ENCODE measurements at regions of chr2 and their contacts with region 1.

Region 1: DNA sequence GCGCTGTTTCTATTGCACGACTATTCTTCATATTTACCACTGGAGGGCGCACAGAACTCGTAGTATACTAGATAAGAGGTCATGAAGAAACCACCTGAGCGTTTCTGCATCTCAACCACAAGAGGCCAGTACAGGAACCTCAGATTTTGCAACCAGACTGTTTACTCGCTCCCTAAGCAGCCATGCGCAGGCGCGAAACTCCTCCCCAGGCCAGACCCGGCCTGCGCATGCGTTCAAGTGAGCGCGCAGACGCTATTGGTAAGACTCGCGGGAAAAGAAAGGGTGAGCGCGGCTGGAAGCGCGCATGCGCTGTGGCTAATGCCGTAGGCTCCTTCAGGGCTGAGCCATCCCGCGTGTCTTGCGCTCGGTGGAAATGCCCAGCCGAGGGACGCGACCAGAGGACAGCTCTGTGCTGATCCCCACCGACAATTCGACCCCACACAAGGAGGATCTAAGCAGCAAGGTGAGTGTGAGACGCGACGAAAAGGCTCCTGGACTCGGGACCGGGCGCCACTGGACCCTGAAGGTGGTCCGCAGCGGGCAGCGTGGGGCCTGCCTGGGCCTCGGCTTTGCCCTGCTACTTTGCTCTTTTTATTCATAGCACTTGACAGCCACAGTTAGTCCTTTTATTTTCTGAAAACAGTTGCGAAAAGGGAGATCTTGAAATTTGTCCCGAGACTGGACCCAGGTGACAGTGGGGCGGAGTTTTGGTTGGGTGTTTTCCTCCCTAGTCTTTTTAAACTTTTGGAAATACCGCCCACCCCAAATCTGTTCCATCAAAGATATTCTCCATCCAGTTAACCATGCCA is at the start of gene ASNSD1:
- DNase-seq: peak; percentile 97 to 100 (median 99)
- ATAC-seq: peak; percentile 89
- H3K4me3 ChIP-seq: peak within 1 kb of the TSS; percentile 79 to 88
- H3K4me3 Mint-ChIP-seq: no peak within 1 kb of the TSS
- H3K27ac ChIP-seq: peak within 1 kb of the TSS; percentile 87 to 91
- H3K27ac Mint-ChIP-seq: no peak within 1 kb of the TSS
- H3K4me1 ChIP-seq: peaks cover 47% of the 10 kb centered on the region
- H3K4me1 Mint-ChIP-seq: peaks cover 61% of the 10 kb centered on the region
- H3K27me3 ChIP-seq: no peaks in the 10 kb centered on the region
- H3K27me3 Mint-ChIP-seq: no peaks in the 10 kb centered on the region
- CTCF ChIP-seq: peak; percentile 92
- total RNA-seq, gene ASNSD1: 62.7 to 69.4 TPM

Region 2: DNA sequence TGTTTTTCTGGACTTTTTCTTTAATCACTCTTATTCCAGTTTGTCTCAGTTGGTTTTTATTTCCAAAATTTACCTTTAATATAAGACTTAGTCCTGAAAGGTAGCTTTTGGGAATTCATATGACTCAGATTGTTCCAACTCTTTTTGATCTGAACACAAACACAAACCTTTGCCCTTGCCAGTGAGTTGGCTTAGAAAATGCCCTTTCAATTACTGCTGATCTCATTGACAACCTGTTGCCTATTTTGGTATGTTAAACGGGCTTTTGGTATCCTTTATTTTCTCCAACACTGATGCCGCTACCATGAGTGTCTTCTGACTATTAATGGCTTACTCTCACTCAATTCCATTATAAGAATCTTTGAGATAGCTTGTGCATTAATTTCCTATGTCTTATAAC is 1226.2 kb before region 1 on chr2:
- CTCF ChIA-PET with region 1: no interaction called
- POLR2A ChIA-PET with region 1: no interaction called
- intact Hi-C with region 1: no loop called
- DNase-seq: no peak
- ATAC-seq: no peak
- H3K4me3 ChIP-seq: no peak overlapping the region
- H3K4me3 Mint-ChIP-seq: no peak overlapping the region
- H3K27ac ChIP-seq: no peak overlapping the region
- H3K27ac Mint-ChIP-seq: no peak overlapping the region
- H3K4me1 ChIP-seq: no peaks in the 10 kb centered on the region
- H3K4me1 Mint-ChIP-seq: no peaks in the 10 kb centered on the region
- H3K27me3 ChIP-seq: no peaks in the 10 kb centered on the region
- H3K27me3 Mint-ChIP-seq: no peaks in the 10 kb centered on the region
- CTCF ChIP-seq: no peak

Region 3: DNA sequence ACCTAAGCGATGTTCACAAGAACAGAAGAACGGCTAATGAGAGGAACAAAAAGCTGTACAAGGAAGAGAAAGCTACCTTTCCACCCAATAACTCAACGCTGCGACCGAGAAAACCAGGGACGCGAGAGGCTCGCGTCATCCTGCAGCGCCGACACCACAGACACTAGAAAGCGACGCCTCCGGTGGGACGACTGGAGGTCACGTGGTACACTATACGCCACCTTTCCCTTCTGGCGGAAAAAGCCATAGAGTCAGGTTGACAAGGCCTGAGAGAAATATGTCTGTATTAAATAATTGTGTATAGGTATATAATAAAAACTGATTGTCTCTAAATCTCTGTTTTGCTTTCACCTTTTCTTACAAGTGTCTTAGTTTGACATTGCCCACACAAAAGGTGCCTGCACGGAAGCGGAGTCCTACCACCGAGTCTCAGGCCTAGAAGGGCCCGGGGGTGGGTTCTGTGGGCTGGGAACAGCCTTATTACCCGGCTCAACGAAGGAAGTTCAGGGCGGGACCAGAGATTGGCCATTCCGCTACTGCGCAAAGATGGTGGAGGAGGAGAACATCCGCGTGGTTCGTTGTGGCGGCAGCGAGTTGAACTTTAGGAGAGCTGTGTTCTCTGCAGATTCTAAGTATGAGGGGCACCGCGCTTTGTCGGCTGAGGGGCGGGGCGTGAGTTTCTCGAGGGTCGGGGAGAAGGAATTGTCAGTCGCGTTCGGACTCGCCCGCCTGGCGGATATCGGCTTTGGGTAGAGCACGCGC is 220.2 kb before region 1 on chr2 and contains the start of gene WDR75:
- CTCF ChIA-PET with region 1: interaction called, 3 read pairs
- POLR2A ChIA-PET with region 1: interaction called, 8 read pairs
- intact Hi-C with region 1: loop called (anchors 2 to 5 kb)
- DNase-seq: peak; percentile 85 to 97 (median 92)
- ATAC-seq: peak; percentile 94
- H3K4me3 ChIP-seq: peak within 1 kb of the TSS; percentile 71 to 92
- H3K4me3 Mint-ChIP-seq: peak within 1 kb of the TSS; percentile 100
- H3K27ac ChIP-seq: peak within 1 kb of the TSS; percentile 96 to 98
- H3K27ac Mint-ChIP-seq: peak within 1 kb of the TSS; percentile 100
- H3K4me1 ChIP-seq: peaks cover 33% of the 10 kb centered on the region
- H3K4me1 Mint-ChIP-seq: peaks cover 12% of the 10 kb centered on the region
- H3K27me3 ChIP-seq: no peaks in the 10 kb centered on the region
- H3K27me3 Mint-ChIP-seq: no peaks in the 10 kb centered on the region
- CTCF ChIP-seq: no peak
- total RNA-seq, gene WDR75: 45.0 to 52.6 TPM

Region 4: DNA sequence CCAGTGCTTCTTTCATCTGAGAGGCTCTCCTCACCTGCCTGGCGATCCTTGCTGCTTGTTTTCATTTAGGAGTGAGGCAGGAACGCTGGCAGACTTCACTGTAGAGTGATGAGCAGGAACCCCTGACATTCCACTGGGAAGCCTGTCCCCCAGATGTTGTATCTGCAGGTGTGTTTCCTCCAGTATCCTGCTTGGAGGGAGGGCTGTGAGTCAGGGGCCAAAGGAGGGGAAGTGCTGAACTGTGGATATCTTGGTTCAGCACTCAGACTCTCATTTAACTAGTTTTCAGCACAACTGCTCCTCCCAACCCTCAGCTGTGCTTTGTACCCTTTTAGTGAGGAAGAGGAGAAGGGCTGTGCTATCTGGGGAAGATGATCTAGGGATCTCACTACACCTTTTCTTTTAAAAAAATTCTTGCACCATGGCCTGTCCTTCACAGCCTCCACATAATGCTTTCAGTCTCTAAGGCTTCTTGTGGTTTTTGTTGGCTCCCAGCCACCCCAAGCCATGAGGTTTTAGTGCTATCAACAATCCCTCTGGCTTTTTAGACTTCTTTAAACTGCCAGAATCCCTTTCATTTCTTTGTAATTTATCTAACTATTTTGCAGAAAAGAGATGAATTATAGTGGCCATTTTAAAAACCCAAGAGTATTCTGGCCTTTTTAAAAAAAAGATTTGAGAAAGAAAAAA is 24.3 kb after region 1 on chr2:
- CTCF ChIA-PET with region 1: interaction called, 10 read pairs
- POLR2A ChIA-PET with region 1: no interaction called
- intact Hi-C with region 1: no loop called
- DNase-seq: peak in 3 of 9 experiments; percentile 21 to 36 (median 21)
- ATAC-seq: no peak
- H3K4me3 ChIP-seq: no peak overlapping the region
- H3K4me3 Mint-ChIP-seq: no peak overlapping the region
- H3K27ac ChIP-seq: no peak overlapping the region
- H3K27ac Mint-ChIP-seq: no peak overlapping the region
- H3K4me1 ChIP-seq: peaks cover 6% of the 10 kb centered on the region
- H3K4me1 Mint-ChIP-seq: peaks cover 26% of the 10 kb centered on the region
- H3K27me3 ChIP-seq: no peaks in the 10 kb centered on the region
- H3K27me3 Mint-ChIP-seq: no peaks in the 10 kb centered on the region
- CTCF ChIP-seq: no peak

Region 5: GRCh38 chr2:189762551-189763298 is 101.4 kb after region 1 on chr2 and contains the start of gene OSGEPL1:
- CTCF ChIA-PET with region 1: interaction called, 9 read pairs
- POLR2A ChIA-PET with region 1: interaction called, 14 read pairs
- intact Hi-C with region 1: loop called (anchors 1 to 5 kb)
- DNase-seq: peak; percentile 84 to 97 (median 94)
- ATAC-seq: peak; percentile 92
- H3K4me3 ChIP-seq: peak within 1 kb of the TSS; percentile 69 to 83
- H3K4me3 Mint-ChIP-seq: peak within 1 kb of the TSS; percentile 97
- H3K27ac ChIP-seq: peak within 1 kb of the TSS; percentile 85 to 88
- H3K27ac Mint-ChIP-seq: peak within 1 kb of the TSS; percentile 98
- H3K4me1 ChIP-seq: peaks cover 8% of the 10 kb centered on the region
- H3K4me1 Mint-ChIP-seq: peaks cover 15% of the 10 kb centered on the region
- H3K27me3 ChIP-seq: no peaks in the 10 kb centered on the region
- H3K27me3 Mint-ChIP-seq: no peaks in the 10 kb centered on the region
- CTCF ChIP-seq: peak; percentile 52
- total RNA-seq, gene OSGEPL1: 3.6 to 3.9 TPM

Region 6: GRCh38 chr2:190277234-190278112 is 616.1 kb after region 1 on chr2:
- CTCF ChIA-PET with region 1: no interaction called
- POLR2A ChIA-PET with region 1: no interaction called
- intact Hi-C with region 1: loop called in 1 of 2 experiments (anchors 1 kb)
- DNase-seq: peak in 3 of 9 experiments; percentile 5 to 37 (median 22)
- ATAC-seq: peak; percentile 54
- H3K4me3 ChIP-seq: no peak overlapping the region
- H3K4me3 Mint-ChIP-seq: no peak overlapping the region
- H3K27ac ChIP-seq: no peak overlapping the region
- H3K27ac Mint-ChIP-seq: no peak overlapping the region
- H3K4me1 ChIP-seq: no peaks in the 10 kb centered on the region
- H3K4me1 Mint-ChIP-seq: no peaks in the 10 kb centered on the region
- H3K27me3 ChIP-seq: no peaks in the 10 kb centered on the region
- H3K27me3 Mint-ChIP-seq: no peaks in the 10 kb centered on the region
- CTCF ChIP-seq: peak; percentile 50

Region 7: GRCh38 chr2:190648289-190649034 is 987.1 kb after region 1 on chr2:
- CTCF ChIA-PET with region 1: no interaction called
- POLR2A ChIA-PET with region 1: no interaction called
- intact Hi-C with region 1: loop called in 1 of 2 experiments (anchors 5 kb)
- DNase-seq: peak; percentile 80 to 97 (median 88)
- ATAC-seq: peak; percentile 81
- H3K4me3 ChIP-seq: peak overlapping the region; percentile 58 to 63
- H3K4me3 Mint-ChIP-seq: peak overlapping the region; percentile 84
- H3K27ac ChIP-seq: peak overlapping the region; percentile 63 to 84
- H3K27ac Mint-ChIP-seq: peak overlapping the region; percentile 88
- H3K4me1 ChIP-seq: peaks cover 26% of the 10 kb centered on the region
- H3K4me1 Mint-ChIP-seq: peaks cover 44% of the 10 kb centered on the region
- H3K27me3 ChIP-seq: no peaks in the 10 kb centered on the region
- H3K27me3 Mint-ChIP-seq: no peaks in the 10 kb centered on the region
- CTCF ChIP-seq: no peak

Region 8: DNA sequence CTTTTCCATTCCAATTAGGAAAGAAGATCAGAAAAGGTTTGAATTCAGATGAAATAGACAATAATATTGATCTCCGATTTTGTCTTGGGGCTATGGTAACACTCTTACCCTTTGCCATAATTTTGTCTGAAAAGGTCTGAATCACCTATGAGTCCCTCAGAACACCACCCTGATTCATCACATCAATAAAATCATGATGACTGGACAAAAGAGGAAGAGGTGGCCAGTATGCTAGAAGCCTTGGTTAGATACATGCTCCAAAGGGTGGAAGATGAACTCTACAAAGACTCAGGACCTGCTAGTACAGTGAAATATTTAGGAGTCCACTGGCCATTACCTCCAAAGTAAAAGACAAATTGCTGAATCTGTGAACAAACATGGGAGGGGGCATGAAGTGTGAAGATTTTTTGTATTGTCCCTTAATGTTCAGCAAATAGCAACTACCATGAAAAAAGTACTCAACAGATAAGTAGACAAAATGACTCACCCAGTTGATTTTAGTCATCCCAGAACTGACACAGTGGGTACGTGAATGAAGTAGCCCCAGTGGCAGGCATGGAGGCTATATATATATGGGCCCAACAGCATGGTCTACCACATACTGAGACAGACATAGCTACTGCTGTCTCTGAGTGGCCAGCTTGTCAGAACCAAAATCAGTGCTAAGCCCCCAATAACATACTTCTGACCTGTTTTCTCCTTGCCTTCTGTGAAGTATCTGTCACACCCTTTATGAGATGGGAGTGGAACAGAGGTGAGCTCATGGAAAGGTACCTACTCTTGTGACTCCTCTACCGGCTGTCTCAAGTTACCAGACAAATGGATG is 1182.7 kb after region 1 on chr2:
- CTCF ChIA-PET with region 1: no interaction called
- POLR2A ChIA-PET with region 1: no interaction called
- intact Hi-C with region 1: no loop called
- DNase-seq: no peak
- ATAC-seq: no peak
- H3K4me3 ChIP-seq: no peak overlapping the region
- H3K4me3 Mint-ChIP-seq: no peak overlapping the region
- H3K27ac ChIP-seq: no peak overlapping the region
- H3K27ac Mint-ChIP-seq: no peak overlapping the region
- H3K4me1 ChIP-seq: no peaks in the 10 kb centered on the region
- H3K4me1 Mint-ChIP-seq: no peaks in the 10 kb centered on the region
- H3K27me3 ChIP-seq: no peaks in the 10 kb centered on the region
- H3K27me3 Mint-ChIP-seq: no peaks in the 10 kb centered on the region
- CTCF ChIP-seq: no peak

Measured in CD8-positive, alpha-beta T cell (primary cell).